A549 (cell line): ENCODE measurements at regions of chr9 and their contacts with region 1.

Region 1: DNA sequence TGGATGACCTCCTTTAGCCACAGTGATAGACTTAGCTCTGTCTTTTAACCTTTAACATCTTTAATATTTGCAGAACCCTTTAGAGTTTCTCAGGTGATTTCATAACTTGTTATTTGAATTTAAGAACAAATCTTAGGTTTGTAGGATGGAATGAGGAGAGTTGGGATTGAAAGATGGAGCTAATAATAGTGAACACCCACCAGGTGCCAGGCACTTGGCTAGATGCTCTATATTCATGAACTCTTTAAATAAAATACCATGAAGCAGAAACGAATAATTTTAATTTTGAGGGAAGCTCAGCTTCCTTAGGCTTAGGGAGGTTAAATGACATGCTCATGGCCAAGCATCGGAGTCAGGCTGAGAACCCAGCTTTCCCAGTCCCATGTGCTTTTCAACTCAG is 19.4 kb upstream of the CARNMT1 start:
- DNase-seq: no peak
- ATAC-seq: no peak
- H3K4me3 ChIP-seq: no peak overlapping the region
- H3K27ac ChIP-seq: no peak overlapping the region
- H3K4me1 ChIP-seq: no peaks in the 10 kb centered on the region
- CTCF ChIP-seq: no peak
- EP300 ChIP-seq: no peak
- POLR2A ChIP-seq: no peak
- RAD21 ChIP-seq: no peak

Region 2: DNA sequence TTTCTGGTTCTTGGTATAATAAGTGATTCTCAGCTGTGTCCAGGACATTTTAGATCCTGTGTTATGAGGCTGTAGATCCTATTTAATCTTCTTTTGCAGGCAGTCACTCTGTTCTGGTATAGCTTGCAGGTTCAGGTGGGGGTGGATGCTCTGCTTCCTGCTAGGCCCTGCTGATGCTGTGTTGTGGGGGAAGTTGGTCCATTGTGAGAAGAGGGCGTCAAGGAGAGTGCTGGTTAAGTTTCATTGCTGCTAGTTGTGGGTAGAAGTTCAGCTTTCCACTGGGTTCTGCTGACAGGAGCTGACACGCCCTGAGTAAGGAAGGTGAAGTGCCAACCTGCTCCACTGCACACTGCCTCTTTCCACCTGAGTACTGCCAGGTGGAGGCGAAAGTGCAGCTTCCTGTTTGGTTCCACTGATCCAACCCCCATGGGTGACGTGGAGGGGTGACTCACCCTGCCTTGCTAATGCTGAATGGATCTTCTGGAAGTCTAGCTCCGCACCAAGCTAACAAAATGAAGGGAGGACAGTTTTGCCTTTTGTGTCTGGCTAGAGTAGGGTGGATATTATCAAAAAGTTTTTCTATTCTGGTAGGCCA is 24.1 kb after region 1 on chr9:
- CTCF ChIA-PET with region 1: interaction called, 10 read pairs
- POLR2A ChIA-PET with region 1: no interaction called
- DNase-seq: no peak
- ATAC-seq: no peak
- H3K4me3 ChIP-seq: no peak overlapping the region
- H3K27ac ChIP-seq: no peak overlapping the region
- H3K4me1 ChIP-seq: no peaks in the 10 kb centered on the region
- CTCF ChIP-seq: no peak
- EP300 ChIP-seq: no peak
- POLR2A ChIP-seq: no peak
- RAD21 ChIP-seq: no peak